ENCODE measurements at regions of chr9 and their contacts with region 1.

Region 1: GRCh38 chr9:136619742-136620440 is 42.8 kb upstream of the EGFL7 start:
- DNase-seq: peak in 2 of 4 donors; percentile 90 to 97
- ATAC-seq: peak; percentile 61
- H3K4me3 ChIP-seq: no peak overlapping the region
- H3K27ac ChIP-seq: peak overlapping the region; percentile 44 to 95
- H3K4me1 ChIP-seq: peaks cover 18 to 87% of the 10 kb centered on the region in 2 donors
- H3K27me3 ChIP-seq: no peaks in the 10 kb centered on the region
- CTCF ChIP-seq: no peak

Region 2: DNA sequence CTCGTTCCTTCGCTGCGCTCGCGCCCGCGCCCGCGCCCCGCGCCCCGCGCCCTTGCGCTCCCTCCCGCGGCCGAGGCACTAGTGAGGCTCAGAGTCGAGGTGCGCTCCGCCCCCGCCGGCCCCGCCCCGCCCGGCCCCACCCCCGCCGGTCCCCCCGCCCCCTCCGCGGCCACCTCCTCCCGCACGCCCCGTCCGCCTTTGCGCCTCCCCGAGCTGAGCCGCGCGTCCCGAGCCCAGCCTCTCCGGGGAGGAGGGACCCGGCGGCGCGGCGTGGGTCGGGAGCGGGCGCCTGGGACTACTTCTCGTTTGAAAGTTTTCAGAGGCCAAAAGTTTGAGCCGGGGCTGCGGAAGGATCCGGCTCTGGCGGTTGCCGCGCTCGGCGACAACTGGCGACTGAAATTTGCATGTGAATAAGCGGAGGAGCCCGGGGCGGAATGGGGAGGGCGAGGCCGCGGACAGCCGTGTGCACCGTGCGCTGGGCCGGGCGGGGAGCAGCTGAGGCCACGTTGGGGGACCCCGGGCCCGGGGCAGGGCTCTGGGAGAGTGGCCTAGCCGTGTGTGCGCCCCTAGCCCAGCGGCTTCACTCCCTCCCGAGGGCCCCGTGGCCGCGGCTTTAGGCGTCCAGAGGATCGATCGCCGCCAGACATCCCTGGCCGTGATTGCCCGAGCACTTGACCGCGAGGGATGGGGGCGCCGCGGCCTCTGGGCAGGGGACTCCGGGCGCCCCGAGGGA is 73.8 kb before region 1 on chr9 and contains the start of gene NOTCH1:
- intact Hi-C with region 1: loop called in 1 of 2 experiments (anchors 10 kb)
- DNase-seq: peak; percentile 86 to 99 (median 94)
- ATAC-seq: peak; percentile 86
- H3K4me3 ChIP-seq: peak within 1 kb of the TSS; percentile 78 to 96
- H3K27ac ChIP-seq: peak within 1 kb of the TSS; percentile 98 to 99
- H3K4me1 ChIP-seq: peaks cover 35 to 73% of the 10 kb centered on the region in 2 donors
- H3K27me3 ChIP-seq: no peaks in the 10 kb centered on the region
- CTCF ChIP-seq: no peak
- polyA plus RNA-seq, gene NOTCH1: 21.7 to 41.7 (median 30.4) TPM

Region 3: DNA sequence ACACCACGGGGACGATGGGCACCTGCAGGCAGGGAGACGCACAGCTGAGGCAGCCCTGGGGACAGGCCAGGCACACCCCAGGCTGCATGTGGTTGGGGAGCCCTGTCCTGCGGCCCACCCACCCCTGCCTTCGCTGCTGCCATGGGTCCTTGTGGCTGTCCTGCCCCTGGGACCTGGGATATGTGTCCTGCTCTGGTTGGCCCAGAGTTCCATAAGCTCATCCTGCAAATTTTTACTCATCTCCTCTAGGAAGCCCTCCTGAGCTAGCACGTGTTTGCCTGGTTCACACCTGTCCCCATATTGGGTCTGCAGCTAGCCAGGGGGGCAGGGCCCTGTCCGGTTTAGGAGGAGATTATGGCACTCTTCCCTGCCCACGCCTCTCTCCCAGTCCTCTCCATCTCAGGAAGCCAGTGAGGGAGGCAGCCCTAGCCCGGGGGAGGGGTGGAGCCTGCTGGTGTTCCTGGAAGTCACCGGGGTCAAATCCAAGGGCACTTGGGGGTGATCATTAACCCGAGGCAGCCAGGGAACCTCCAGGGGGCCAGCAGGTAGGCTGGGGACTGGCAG is 55.0 kb after region 1 on chr9:
- intact Hi-C with region 1: no loop called
- DNase-seq: peak in 2 of 4 donors; percentile 79 to 88
- ATAC-seq: peak; percentile 62
- H3K4me3 ChIP-seq: no peak overlapping the region
- H3K27ac ChIP-seq: peak overlapping the region in 1 of 2 donors; percentile 24
- H3K4me1 ChIP-seq: peaks cover under 1 to 45% of the 10 kb centered on the region in 2 donors
- H3K27me3 ChIP-seq: peaks cover 0 to 6% of the 10 kb centered on the region in 2 donors
- CTCF ChIP-seq: no peak

Region 4: DNA sequence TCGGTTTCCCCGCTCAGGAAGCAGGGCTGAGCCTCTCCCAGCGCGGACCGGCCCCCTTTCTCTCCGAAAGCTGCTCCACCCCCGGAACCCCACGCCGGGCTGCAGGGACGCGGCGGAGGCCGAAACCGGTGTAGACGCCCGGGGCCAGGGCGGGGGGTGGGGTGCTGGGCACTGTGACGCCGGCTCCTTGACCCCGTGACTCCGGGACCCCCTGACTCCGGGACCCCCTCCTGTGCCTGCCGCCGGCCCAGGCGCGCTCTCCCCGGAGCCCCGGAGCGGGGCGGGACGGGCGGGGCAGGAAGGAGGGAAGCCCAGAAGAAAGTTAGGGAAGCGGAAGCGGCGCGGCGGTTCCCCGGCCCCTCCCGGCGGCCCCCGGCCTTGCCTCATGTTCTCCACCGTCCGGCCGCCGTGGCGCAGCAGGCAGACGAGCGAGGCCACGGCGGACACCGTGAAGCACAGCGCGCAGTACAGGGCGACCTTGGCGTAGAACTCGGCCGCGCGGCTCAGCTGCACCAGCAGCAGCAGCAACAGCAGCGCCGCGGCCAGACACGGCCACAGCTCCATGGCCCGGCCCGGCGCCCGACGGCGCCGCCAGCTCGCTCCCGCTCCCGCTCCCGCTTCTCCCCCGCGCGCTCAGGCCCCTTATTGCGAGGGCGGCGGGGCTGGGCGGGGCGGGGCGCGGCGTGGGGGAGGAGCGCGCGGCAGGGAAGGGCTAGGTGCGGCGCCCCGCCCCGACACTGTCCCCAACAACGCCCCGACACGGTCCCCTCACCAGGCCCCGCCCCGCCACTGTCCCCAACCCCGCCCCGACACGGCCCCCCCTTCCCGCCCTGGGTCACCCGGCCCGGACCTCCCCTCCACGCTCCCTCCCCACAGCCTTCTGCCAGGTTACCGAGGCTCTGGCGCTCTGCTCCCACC is 67.2 kb after region 1 on chr9 and contains the start of gene AGPAT2:
- intact Hi-C with region 1: no loop called
- DNase-seq: peak in 3 of 4 donors; percentile 64 to 95 (median 89)
- ATAC-seq: peak; percentile 80
- H3K4me3 ChIP-seq: peak within 1 kb of the TSS; percentile 92 to 94
- H3K27ac ChIP-seq: peak within 1 kb of the TSS; percentile 85 to 99
- H3K4me1 ChIP-seq: peaks cover 24 to 79% of the 10 kb centered on the region in 2 donors
- H3K27me3 ChIP-seq: no peaks in the 10 kb centered on the region
- CTCF ChIP-seq: no peak
- polyA plus RNA-seq, gene AGPAT2: 24.9 to 48.3 (median 31.9) TPM